H1 (cell line): ENCODE measurements at regions of chr17 and their contacts with region 1.

Region 1: GRCh38 chr17:76567634-76568432 is 17.8 kb downstream of the ST6GALNAC2 start:
- DNase-seq: no peak
- H3K4me3 ChIP-seq: no peak overlapping the region
- H3K27ac ChIP-seq: no peak overlapping the region
- H3K4me1 ChIP-seq: peaks cover 0 to 21% (median 5%) of the 10 kb centered on the region in 4 experiments; a peak in 6 of 7 replicates
- H3K27me3 ChIP-seq: no peaks in the 10 kb centered on the region; a peak in 2 of 7 replicates
- CTCF ChIP-seq: no peak
- EP300 ChIP-seq: no peak
- POLR2A ChIP-seq: peak in 1 of 2 experiments; percentile 49; a peak in 1 of 3 replicates
- RAD21 ChIP-seq: no peak

Region 2: GRCh38 chr17:76578344-76578979 is 10.6 kb after region 1 on chr17:
- CTCF ChIA-PET with region 1: interaction called, 13 read pairs
- POLR2A ChIA-PET with region 1: interaction called, 31 read pairs
- DNase-seq: no peak
- H3K4me3 ChIP-seq: no peak overlapping the region
- H3K27ac ChIP-seq: no peak overlapping the region
- H3K4me1 ChIP-seq: peaks cover 0 to 9% (median 4%) of the 10 kb centered on the region in 4 experiments; a peak in 5 of 7 replicates
- H3K27me3 ChIP-seq: peaks cover 0 to 31% (median 25%) of the 10 kb centered on the region in 4 experiments; a peak in 6 of 7 replicates
- CTCF ChIP-seq: no peak
- EP300 ChIP-seq: no peak
- POLR2A ChIP-seq: no peak
- RAD21 ChIP-seq: no peak

Region 3: DNA sequence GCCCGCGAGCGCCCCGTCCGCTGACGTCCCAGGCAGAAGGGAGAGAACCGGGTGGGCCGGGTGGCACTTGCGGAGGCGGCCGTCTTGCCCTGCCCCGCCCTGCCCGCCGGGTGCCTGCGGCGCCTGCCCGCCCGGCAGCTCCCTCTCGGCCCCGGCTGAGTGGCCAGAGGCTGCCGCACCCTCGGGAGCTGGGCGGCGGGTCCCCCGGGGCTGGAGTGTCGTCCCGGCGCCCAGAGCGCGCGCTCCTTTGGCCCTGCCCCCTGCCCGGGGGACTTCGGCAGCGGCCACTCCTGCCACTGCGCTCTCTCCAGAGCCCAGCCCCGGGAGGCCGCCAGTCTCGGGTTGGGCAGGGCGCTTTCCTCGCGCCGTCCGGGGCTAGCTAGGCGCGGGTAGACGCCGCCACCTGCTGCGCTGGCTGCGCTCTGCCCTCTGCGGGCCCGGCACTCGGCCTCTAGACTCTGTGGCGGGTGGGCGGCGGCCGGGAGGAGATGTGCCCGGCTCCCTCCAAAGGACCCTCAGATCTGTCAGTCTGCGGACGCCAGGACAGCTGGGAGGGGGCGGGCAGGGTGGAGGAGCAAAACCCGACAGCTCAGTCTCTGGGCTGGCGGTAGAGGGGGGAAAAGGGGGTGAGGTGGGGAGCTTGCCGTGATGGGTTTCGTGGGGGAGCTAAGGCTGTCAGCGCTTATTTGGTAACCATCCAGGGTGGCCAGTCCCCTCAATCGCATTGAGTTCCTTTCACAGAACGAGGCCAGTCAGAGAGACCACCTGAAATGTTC is 18.2 kb after region 1 on chr17 and contains the start of gene ST6GALNAC2:
- CTCF ChIA-PET with region 1: interaction called, 5 read pairs
- POLR2A ChIA-PET with region 1: interaction called, 16 read pairs
- DNase-seq: peak in 1 of 2 experiments; percentile 67
- H3K4me3 ChIP-seq: peak within 1 kb of the TSS; percentile 42 to 81 (median 48)
- H3K27ac ChIP-seq: no peak within 1 kb of the TSS
- H3K4me1 ChIP-seq: peaks cover 0 to 22% (median 10%) of the 10 kb centered on the region in 4 experiments; a peak in 6 of 7 replicates
- H3K27me3 ChIP-seq: peaks cover 33 to 64% (median 51%) of the 10 kb centered on the region in 4 experiments
- CTCF ChIP-seq: no peak
- EP300 ChIP-seq: no peak
- POLR2A ChIP-seq: no peak
- RAD21 ChIP-seq: no peak; a peak in 1 of 4 replicates
- total RNA-seq, gene ST6GALNAC2: not detected in 2 replicates